ENCODE measurements at regions of chrX and their contacts with region 1.

Region 1: DNA sequence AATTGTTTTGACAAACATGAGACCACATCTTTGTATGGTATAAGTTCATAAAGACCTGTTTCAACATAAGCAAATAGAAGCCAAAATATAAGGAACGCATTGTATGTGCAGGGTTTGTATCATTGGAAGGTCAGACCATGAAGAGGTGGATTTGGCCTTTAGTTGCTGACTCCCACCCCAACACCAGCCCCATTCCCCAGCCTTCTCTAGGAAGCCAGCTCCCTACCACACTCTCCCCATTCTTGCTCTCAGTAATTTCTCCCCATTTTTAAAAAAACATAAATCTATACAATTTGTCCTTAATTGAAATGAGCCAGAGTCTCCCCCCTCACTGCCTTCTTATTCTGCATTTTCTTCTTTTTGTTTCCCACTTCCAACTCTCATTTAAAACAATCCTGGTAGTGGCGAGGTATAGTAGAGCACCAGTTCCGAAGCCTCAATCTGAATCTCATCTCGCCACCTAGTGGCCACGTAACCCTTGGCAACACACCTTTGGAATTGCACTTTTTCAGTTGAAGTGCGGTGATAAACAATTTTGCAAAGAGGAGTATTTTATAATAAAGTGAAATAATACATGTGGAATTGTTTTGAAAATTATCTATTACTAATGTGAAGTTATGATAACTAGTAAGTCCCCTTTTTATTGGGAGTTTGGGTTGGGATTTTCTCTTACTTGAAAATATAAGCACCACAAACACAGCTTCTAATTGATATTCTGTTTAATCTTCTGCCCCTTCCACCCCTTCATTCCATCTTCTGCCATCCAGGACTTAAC is 126.6 kb downstream of the ASB9 start:
- DNase-seq: peak in 2 of 3 donors; percentile 50 to 83
- ATAC-seq: peak; percentile 89
- H3K4me3 ChIP-seq: no peak overlapping the region
- H3K4me1 ChIP-seq: no peaks in the 10 kb centered on the region
- CTCF ChIP-seq: no peak

Region 2: DNA sequence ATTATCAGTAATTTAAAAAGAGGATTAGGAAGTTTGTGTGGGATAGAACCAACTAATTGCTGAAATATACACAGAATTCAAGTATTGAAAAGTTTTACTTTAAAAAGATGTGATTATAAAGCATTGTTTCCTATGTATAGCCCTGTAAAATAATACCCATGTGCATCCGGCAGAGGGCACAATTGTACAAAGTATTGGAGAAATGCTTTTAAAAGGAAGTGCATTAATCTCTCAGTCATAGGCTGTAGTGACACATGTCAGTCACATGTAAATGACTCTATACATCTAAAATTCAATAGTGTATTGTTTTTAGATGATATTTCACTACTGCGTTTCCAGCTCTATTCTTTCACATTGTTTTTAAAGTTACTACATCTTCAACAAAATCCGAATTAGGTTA is 1103.9 kb before region 1 on chrX:
- intact Hi-C with region 1: loop called in 1 of 2 experiments (anchors 5 kb)
- DNase-seq: peak in 1 of 3 donors; percentile 66
- ATAC-seq: peak; percentile 87
- H3K4me3 ChIP-seq: no peak overlapping the region
- H3K4me1 ChIP-seq: no peaks in the 10 kb centered on the region
- CTCF ChIP-seq: no peak

Region 3: DNA sequence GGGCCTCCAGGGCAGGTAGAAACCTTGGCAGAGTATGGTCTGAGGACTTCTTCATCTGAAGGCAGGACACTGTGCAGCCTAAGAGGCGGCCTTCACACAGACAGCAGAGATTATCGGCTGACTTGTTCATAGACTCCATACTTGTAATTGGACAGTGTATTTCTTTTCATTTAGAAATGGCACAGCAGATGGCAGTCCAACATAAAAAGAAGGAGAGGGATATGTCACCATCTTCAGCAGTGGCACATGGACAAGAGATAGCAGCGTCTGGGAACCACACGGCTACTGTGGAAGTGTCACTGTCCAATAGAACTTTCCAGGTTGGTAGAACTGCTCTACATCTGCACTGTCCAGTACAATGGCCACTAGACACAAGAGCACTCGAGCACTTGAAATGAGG is 1091.8 kb before region 1 on chrX:
- intact Hi-C with region 1: loop called in 1 of 2 experiments (anchors 10 kb)
- DNase-seq: peak in 1 of 3 donors; percentile 43
- ATAC-seq: peak; percentile 74
- H3K4me3 ChIP-seq: no peak overlapping the region
- H3K4me1 ChIP-seq: no peaks in the 10 kb centered on the region
- CTCF ChIP-seq: no peak

Region 4: GRCh38 chrX:15277604-15278003 is 134.4 kb after region 1 on chrX:
- intact Hi-C with region 1: no loop called
- DNase-seq: no peak
- ATAC-seq: no peak
- H3K4me3 ChIP-seq: no peak overlapping the region
- H3K4me1 ChIP-seq: no peaks in the 10 kb centered on the region
- CTCF ChIP-seq: no peak

Measured in mucosa of descending colon (tissue), 3 donors.